ENCODE measurements at regions of chr10 and their contacts with region 1.

Region 1: DNA sequence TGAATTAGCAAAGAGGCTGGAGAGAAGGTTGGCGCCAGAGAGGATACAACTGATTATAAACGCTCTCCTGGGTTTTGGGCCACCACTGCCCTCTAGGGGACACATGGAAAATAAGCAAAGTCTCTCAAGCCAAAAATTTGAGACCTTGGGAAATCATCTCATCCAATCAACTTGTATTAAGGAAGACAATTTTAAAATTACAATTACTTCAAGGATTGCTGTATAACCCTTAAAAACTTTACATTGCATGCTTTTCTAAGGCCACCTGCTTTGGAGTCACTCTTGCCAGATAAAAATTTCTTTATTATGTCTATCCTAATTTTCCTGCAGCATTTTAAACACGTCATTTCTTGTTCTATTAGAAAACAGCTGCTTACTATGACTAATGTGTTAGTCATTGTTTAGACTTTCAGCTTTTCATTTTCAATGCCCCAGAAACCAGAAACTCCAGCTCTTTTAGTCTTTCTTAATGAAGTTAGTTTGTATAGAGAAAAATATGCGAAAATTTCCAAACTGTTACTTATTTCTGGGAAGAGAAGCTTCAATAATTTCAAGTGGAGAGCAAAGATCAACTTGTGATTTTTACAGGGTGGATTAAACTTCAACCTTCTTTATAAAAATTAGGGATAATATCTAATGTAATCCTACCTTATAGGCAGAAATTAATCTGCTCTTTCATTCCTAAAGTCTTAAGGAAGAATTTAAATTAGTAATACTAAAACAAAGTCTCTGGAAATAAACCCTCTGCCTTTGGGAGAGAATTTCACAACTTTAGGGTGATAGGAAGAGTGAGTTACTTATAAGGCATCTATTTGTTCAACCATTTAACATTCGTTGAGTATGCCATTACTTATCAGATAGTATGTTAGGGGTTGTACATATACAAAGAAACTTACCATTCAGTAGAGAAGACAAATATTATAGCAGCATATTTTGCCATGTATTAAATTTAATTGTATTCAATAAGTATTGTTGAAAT is 20.6 kb upstream of the RHOBTB1 start:
- DNase-seq: peak; percentile 79
- H3K4me3 Mint-ChIP-seq: peak overlapping the region; percentile 35
- H3K27ac Mint-ChIP-seq: peak overlapping the region; percentile 84
- H3K4me1 Mint-ChIP-seq: peaks cover 40% of the 10 kb centered on the region
- H3K27me3 Mint-ChIP-seq: no peaks in the 10 kb centered on the region
- CTCF ChIP-seq: peak; percentile 82

Region 2: GRCh38 chr10:60883187-60883586 is 81.4 kb before region 1 on chr10:
- CTCF ChIA-PET with region 1: interaction called, 8 read pairs
- intact Hi-C with region 1: loop called (anchors 1 kb)
- DNase-seq: peak; percentile 51
- H3K4me3 Mint-ChIP-seq: no peak overlapping the region
- H3K27ac Mint-ChIP-seq: no peak overlapping the region
- H3K4me1 Mint-ChIP-seq: no peaks in the 10 kb centered on the region
- H3K27me3 Mint-ChIP-seq: no peaks in the 10 kb centered on the region
- CTCF ChIP-seq: peak; percentile 56

Region 3: GRCh38 chr10:60901561-60902235 is 62.8 kb before region 1 on chr10:
- CTCF ChIA-PET with region 1: no interaction called
- intact Hi-C with region 1: no loop called
- DNase-seq: no peak
- H3K4me3 Mint-ChIP-seq: no peak overlapping the region
- H3K27ac Mint-ChIP-seq: no peak overlapping the region
- H3K4me1 Mint-ChIP-seq: no peaks in the 10 kb centered on the region
- H3K27me3 Mint-ChIP-seq: no peaks in the 10 kb centered on the region
- CTCF ChIP-seq: no peak

Region 4: GRCh38 chr10:60978287-60979115 is 14.0 kb after region 1 on chr10:
- CTCF ChIA-PET with region 1: interaction called, 7 read pairs
- intact Hi-C with region 1: loop called (anchors 1 kb)
- DNase-seq: peak; percentile 56
- H3K4me3 Mint-ChIP-seq: peak overlapping the region; percentile 39
- H3K27ac Mint-ChIP-seq: peak overlapping the region; percentile 88
- H3K4me1 Mint-ChIP-seq: peaks cover 68% of the 10 kb centered on the region
- H3K27me3 Mint-ChIP-seq: no peaks in the 10 kb centered on the region
- CTCF ChIP-seq: no peak

Region 5: DNA sequence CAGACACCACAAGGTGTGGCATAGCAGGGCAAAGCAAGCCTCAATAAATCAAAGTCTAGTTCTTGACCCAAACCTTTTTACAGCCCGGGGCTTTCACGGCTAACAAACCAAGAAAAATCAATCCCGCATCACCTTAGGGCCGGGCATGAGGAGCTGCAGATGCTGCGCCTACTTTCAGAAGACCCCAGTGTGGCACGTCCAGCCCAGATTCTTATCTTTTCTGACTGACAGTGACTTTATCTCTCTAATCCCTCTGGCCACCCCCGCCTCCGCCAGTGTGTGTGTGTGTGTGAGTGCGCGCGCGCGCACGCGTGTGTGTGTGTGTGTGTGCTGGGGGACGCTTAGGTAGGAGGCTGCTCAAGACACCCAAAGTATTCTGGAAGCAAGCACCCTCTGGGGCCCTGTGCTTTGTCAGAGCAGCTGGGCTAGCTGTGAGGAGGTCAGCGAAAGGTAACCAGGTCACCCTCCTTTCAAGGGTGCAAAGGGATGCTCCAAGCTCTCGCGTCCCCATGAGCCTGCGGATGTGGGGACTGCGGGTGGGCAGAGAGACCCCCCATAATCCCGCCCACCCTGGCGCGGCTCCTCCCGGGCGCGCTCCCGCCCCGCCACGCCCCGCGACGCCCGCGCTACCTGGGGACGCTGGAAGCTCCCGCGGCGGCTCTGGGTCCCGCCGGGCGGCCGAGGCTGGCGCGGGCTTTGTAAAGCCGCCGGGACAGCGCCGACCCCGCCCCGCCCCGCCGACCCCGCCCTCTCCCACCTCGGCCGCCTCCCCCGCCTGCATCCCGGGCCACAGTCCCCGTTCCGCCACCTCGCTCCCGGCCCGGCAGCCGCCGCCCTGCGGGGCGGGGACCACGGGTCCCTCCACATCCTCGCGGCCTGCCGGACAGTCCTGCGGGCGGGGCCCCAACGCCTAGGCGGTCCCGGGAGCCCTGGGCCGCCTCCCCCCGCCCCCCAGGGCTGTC is 36.5 kb after region 1 on chr10:
- CTCF ChIA-PET with region 1: interaction called, 4 read pairs
- intact Hi-C with region 1: loop called (anchors 1 kb)
- DNase-seq: peak; percentile 65
- H3K4me3 Mint-ChIP-seq: peak overlapping the region; percentile 84
- H3K27ac Mint-ChIP-seq: peak overlapping the region; percentile 47
- H3K4me1 Mint-ChIP-seq: peaks cover 7% of the 10 kb centered on the region
- H3K27me3 Mint-ChIP-seq: no peaks in the 10 kb centered on the region
- CTCF ChIP-seq: no peak